ENCODE measurements at regions of chr16 and their contacts with region 1.

Region 1: GRCh38 chr16:10521681-10522274 is 58.6 kb downstream of the EMP2 start:
- DNase-seq: peak in 1 of 2 experiments; percentile 30
- H3K4me3 ChIP-seq: no peak overlapping the region
- H3K4me3 Mint-ChIP-seq: no peak overlapping the region
- H3K27ac Mint-ChIP-seq: no peak overlapping the region
- H3K4me1 ChIP-seq: peaks cover 16% of the 10 kb centered on the region
- H3K4me1 Mint-ChIP-seq: peaks cover 25% of the 10 kb centered on the region
- H3K27me3 ChIP-seq: no peaks in the 10 kb centered on the region
- H3K27me3 Mint-ChIP-seq: no peaks in the 10 kb centered on the region
- CTCF ChIP-seq: peak; percentile 12 to 22

Region 2: GRCh38 chr16:10579965-10580882 is 58.4 kb after region 1 on chr16 and contains the start of gene EMP2:
- CTCF ChIA-PET with region 1: no interaction called
- POLR2A ChIA-PET with region 1: interaction called, 4 read pairs
- intact Hi-C with region 1: loop called (anchors 5 kb)
- DNase-seq: peak; percentile 85 to 93
- H3K4me3 ChIP-seq: peak within 1 kb of the TSS; percentile 96
- H3K4me3 Mint-ChIP-seq: peak within 1 kb of the TSS; percentile 90
- H3K27ac Mint-ChIP-seq: peak within 1 kb of the TSS; percentile 93
- H3K4me1 ChIP-seq: peaks cover 49% of the 10 kb centered on the region
- H3K4me1 Mint-ChIP-seq: peaks cover 50% of the 10 kb centered on the region
- H3K27me3 ChIP-seq: no peaks in the 10 kb centered on the region
- H3K27me3 Mint-ChIP-seq: no peaks in the 10 kb centered on the region
- CTCF ChIP-seq: peak; percentile 48 to 81
- total RNA-seq, gene EMP2: 187 and 198 TPM in 2 replicates

Measured in Caco-2 (cell line).